Aorta (tissue), 5 donors: ENCODE measurements at regions of chr21 and their contacts with region 1.

Region 1: GRCh38 chr21:46060596-46061061 is 37.3 kb upstream of the COL6A2 start:
- DNase-seq: peak; percentile 91 to 93
- ATAC-seq: peak; percentile 78
- H3K4me3 ChIP-seq: no peak overlapping the region
- H3K27ac ChIP-seq: peak overlapping the region; percentile 87 to 93
- H3K4me1 ChIP-seq: peaks cover 0 to 2% of the 10 kb centered on the region in 2 donors
- H3K27me3 ChIP-seq: no peaks in the 10 kb centered on the region

Region 2: DNA sequence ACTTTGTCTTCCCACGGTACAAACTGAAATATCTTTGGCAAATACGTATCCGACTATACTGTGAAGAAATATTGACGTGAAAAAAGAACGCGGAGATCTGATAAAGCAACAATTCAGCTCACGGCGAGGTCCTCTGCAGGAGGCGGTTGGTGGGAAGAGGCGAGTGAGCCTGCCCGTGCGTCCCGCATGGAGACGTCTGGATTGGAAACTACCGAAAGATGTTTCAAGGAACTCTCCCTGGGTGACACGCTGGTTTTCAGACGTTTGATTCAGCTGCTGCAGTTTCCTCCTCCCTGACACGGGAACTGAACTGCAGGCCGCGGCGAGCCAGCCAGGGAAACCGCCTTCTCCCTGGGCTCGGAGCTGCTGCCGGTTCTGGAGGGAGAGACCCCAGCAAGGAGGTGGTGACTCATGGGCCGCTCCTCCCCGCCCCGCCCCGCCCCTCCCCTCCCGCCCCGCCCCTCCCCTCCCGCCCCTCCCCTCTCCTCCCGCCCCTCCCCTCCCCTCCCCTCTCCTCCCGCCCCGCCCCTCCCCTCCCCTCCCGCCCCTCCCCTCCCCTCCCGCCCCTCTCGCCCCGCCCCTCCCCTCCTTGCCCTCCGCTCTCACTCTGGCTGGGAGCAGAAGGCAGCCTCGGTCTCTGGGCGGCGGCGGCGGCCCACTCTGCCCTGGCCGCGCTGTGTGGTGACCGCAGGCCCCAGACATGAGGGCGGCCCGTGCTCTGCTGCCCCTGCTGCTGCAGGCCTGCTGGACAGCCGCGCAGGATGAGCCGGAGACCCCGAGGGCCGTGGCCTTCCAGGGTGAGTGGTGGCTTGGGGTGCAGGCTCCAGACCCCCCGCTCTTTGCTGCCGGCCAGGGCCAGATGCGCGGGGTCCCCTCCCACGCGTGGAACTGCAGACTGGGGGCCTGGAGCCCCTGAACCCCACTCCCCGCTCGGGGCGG is 79.2 kb before region 1 on chr21 and contains the start of gene COL6A1:
- intact Hi-C with region 1: loop called (anchors 2 to 5 kb)
- DNase-seq: peak; percentile 92 to 93
- ATAC-seq: peak; percentile 79
- H3K4me3 ChIP-seq: peak within 1 kb of the TSS; percentile 85 to 97
- H3K27ac ChIP-seq: peak within 1 kb of the TSS; percentile 65 to 76
- H3K4me1 ChIP-seq: no peaks in the 10 kb centered on the region
- H3K27me3 ChIP-seq: no peaks in the 10 kb centered on the region
- total RNA-seq, gene COL6A1: 458 to 593 TPM

Region 3: DNA sequence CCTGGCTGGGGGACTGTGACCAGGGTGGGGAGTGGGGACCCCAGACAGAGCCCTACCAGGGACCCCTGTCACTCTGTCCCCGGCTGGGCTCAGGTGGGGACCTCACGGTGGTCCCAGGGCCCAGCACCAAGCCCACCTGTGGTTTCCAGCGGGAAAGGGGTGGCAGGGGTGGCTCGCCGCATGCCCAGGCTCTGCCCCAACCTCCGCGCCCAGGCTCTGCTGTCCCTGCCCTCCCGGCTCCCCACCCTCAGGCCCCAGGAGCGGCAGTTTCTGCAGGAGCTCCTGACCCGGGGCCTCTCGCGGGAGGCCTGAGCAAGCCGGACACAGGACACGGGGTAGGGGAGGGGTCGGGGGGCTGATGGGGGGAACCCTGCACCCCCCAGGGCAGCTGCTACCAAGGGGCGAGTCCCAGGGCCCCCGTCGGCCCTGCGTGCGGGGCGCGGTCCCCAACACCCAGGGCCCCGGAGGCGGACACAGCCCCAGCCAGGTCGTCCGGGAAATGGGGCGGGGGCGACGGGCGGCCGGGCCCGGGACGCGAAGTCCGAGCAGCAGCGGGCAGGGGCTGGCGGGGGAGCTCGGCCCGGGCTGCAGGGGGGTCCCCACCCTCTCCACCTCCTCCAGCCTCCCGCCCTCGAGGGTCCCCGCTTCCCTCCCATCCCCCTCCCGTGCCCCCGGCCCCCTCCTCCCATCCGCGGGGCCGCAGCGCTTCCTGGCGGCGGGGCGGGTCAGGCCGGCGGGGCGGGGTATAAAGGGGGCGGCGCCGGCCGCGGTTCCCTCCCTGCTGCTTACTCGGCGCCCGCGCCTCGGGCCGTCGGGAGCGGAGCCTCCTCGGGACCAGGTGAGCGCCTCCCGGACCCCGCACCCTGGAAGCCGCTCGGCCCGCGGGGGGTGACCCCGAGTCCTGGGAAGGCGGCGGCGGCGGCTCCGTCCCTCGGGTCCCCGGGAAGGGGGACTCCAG is 37.0 kb after region 1 on chr21 and contains the start of gene COL6A2:
- intact Hi-C with region 1: loop called (anchors 2 to 5 kb)
- DNase-seq: peak; percentile 75 to 91
- ATAC-seq: peak; percentile 87
- H3K4me3 ChIP-seq: peak within 1 kb of the TSS; percentile 84 to 98
- H3K27ac ChIP-seq: peak within 1 kb of the TSS; percentile 92
- H3K4me1 ChIP-seq: no peaks in the 10 kb centered on the region
- H3K27me3 ChIP-seq: no peaks in the 10 kb centered on the region
- total RNA-seq, gene COL6A2: 1,386 to 1,431 TPM